AG04449 (cell line): ENCODE measurements at regions of chr9 and their contacts with region 1.

Region 1: DNA sequence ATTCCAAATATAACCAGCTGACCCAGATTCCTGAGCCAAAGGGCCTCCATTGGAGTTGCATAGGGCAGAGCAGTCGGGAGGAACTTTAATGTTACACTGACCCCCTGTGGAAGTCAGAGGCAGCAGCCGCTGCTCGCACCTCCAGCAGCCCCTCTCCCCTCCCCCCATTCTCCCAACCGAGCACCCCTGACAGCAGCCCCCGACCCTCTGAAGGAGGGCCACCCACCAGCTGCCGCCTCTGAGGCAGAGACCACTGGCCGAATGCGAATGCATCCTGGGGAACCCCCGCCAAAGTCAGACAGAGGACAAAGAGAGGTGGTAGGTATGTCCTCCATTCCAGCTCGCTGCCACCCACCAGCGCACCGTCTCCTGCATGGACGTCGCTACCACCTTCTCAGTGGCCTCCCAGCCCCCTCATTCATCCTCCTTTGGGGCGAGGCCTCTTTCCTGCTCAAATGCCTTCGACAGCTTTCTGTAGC is 231.0 kb downstream of the CDK5RAP2 start:
- DNase-seq: no peak
- H3K4me3 ChIP-seq: no peak overlapping the region
- CTCF ChIP-seq: peak; percentile 75

Region 2: DNA sequence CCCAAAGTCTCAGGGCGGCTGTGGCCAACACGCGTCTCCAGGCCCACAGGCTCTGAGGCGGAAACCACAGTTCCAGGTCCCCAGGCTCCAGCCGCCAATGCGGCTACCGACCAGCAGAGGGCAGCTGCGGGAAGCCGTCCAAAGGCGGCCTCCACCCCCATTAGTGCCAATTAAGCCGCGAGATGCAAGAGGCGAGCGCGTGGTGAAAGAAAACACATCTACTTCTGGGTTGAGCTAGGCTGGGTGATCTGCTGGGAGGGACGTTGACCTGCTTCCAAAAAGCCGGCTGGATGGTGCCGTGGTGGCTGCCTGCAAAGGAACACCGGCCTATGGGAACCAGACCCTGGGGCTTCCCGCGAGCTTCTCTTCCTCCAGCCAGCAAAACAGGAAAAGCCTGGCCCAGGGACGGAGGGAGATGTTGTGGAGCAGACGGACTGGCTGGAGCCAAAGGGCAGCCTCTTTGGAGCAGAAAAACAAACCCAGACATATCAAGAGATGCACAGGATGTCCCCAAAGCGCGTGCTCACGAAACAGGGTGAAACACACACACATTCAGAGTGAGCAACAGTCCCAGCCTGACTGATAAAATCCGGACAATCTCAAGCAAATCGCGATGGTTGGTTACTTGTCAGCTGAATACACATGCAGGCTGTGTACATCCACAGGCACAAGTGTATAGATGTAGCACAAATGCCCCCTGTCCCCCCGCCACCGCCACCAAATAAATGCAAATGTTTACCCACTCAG is 792.7 kb before region 1 on chr9:
- CTCF ChIA-PET with region 1: interaction called, 21 read pairs
- POLR2A ChIA-PET with region 1: no interaction called
- DNase-seq: no peak
- H3K4me3 ChIP-seq: peak overlapping the region; percentile 50
- CTCF ChIP-seq: peak; percentile 93

Region 3: GRCh38 chr9:120184266-120184665 is 164.7 kb before region 1 on chr9:
- CTCF ChIA-PET with region 1: no interaction called
- POLR2A ChIA-PET with region 1: no interaction called
- DNase-seq: no peak
- H3K4me3 ChIP-seq: no peak overlapping the region
- CTCF ChIP-seq: no peak

Region 4: DNA sequence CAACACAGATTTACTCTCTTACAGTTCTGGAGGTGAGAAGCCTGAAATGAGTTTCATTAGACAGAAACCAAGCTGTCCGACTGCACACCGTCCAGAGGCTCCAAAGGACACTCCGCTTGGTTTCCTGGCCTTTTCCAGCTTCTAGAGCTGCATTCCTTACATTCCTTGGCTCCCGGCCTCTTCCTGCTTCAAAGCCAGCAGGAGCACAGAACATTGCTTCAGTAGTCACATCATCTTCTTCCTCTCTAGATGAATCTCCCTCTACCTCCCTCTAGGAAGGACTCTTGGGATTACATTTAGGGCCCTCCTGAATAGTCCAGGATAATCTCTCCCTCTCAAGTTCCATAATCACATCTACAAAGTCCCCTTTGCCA is 17.6 kb after region 1 on chr9:
- CTCF ChIA-PET with region 1: interaction called, 14 read pairs
- POLR2A ChIA-PET with region 1: no interaction called
- DNase-seq: peak; percentile 62
- H3K4me3 ChIP-seq: no peak overlapping the region
- CTCF ChIP-seq: peak; percentile 54